HEK293T (cell line): ENCODE measurements at regions of chr4 and their contacts with region 1.

Region 1: DNA sequence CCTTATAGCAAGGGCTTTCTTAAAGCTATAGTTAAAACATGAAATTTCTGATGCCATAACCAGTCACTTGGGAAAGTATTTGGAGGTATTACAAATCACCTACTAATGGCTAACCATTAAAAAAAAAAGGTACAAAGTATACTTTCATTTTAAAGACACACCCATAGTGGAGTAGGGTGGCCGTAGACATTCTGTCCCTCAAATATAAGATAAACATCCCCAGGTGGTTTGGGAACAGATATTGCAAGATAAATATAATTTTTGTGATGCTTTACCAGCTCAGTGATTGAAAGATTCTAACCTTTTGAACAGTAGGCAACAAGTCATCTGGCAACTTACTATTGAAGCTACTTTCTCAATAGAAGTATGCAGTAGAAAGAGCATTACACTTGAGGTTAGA is 6.2 kb upstream of the FAT1 start:
- DNase-seq: no peak

Region 2: GRCh38 chr4:186657764-186658163 is 72.1 kb before region 1 on chr4:
- CTCF ChIA-PET with region 1: no interaction called
- POLR2A ChIA-PET with region 1: no interaction called
- DNase-seq: no peak

Region 3: GRCh38 chr4:186787536-186787935 is 57.7 kb after region 1 on chr4:
- CTCF ChIA-PET with region 1: interaction called, 10 read pairs
- POLR2A ChIA-PET with region 1: interaction called, 3 read pairs
- DNase-seq: no peak